Sigmoid colon (tissue), 7 donors: ENCODE measurements at regions of chr1 and their contacts with region 1.

Region 1: DNA sequence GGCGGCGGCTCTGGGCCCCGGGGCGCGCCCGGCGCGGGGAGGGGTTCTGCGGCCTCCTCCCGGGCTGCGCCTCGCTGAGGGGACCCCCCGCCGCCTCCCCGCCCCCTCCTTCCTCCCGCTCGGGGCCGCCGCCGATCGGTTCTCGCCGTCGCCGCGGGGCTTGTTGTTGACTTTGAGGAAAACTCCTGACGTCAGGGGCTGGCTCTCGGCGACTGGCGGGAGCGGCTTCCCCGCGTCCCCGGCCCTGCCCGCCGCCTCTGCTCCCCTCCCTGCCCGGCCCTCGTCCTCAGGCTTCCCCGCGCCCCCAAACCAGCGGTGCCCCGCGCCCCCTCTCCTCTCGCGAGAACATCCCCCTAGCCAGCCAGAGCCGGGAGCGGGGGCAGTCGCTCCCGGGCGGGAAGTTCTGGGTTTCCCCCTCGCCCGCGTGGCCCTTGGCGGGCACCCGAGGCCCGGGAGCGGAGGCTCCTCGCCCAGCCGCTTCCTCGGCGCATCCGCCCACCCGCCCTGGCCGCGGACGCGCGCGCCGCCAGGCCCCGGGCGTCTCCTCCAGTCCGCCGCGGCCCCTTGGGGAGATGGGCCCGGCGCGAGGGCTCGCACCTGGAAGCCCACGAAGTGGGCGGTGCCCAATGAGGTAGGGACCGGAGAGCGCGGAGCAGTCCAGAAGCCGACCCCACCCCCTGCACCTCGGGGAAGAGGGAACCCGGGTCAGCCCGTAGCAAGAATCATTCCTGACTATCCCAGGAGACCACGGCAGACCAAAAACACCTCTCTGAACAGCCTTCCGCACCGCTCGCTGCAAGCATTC is 611 bp upstream of the AKT3 start:
- DNase-seq: peak; percentile 93
- H3K4me3 ChIP-seq: peak overlapping the region; percentile 95 to 99 (median 97)
- H3K27ac ChIP-seq: peak overlapping the region; percentile 96 to 99 (median 98)
- H3K4me1 ChIP-seq: peaks cover 0 to 27% (median 16%) of the 10 kb centered on the region in 4 donors
- H3K27me3 ChIP-seq: no peaks in the 10 kb centered on the region
- CTCF ChIP-seq: no peak
- EP300 ChIP-seq: no peak
- POLR2A ChIP-seq: no peak

Region 2: GRCh38 chr1:243495442-243496172 is 355.0 kb before region 1 on chr1:
- intact Hi-C with region 1: loop called (anchors 10 kb)
- DNase-seq: peak; percentile 76
- H3K4me3 ChIP-seq: peak overlapping the region in 1 of 4 donors; percentile 14
- H3K27ac ChIP-seq: peak overlapping the region; percentile 66 to 85 (median 80)
- H3K4me1 ChIP-seq: peaks cover 0 to 36% (median 28%) of the 10 kb centered on the region in 4 donors
- H3K27me3 ChIP-seq: no peaks in the 10 kb centered on the region
- CTCF ChIP-seq: no peak
- EP300 ChIP-seq: no peak
- POLR2A ChIP-seq: no peak